ENCODE measurements at regions of chr5 and their contacts with region 1.

Region 1: GRCh38 chr5:93620487-93621326 is 37.7 kb downstream of the NR2F1 start:
- DNase-seq: peak; percentile 76
- ATAC-seq: peak; percentile 89
- H3K4me3 ChIP-seq: peak overlapping the region; percentile 8 to 84 (median 67)
- H3K4me3 Mint-ChIP-seq: peak overlapping the region; percentile 98
- H3K27ac ChIP-seq: no peak overlapping the region
- H3K27ac Mint-ChIP-seq: peak overlapping the region; percentile 60
- H3K4me1 ChIP-seq: peaks cover 5 to 16% of the 10 kb centered on the region in 2 donors
- H3K4me1 Mint-ChIP-seq: peaks cover 22% of the 10 kb centered on the region
- H3K27me3 ChIP-seq: peaks cover 0 to 8% (median 4%) of the 10 kb centered on the region in 4 experiments
- H3K27me3 Mint-ChIP-seq: peaks cover 7% of the 10 kb centered on the region
- CTCF ChIP-seq: no peak

Region 2: GRCh38 chr5:93800988-93801811 is 180.5 kb after region 1 on chr5:
- CTCF ChIA-PET with region 1: interaction called, 8 read pairs
- POLR2A ChIA-PET with region 1: no interaction called
- intact Hi-C with region 1: loop called (anchors 1 kb)
- DNase-seq: peak; percentile 44
- ATAC-seq: no peak
- H3K4me3 ChIP-seq: no peak overlapping the region
- H3K4me3 Mint-ChIP-seq: no peak overlapping the region
- H3K27ac ChIP-seq: no peak overlapping the region
- H3K27ac Mint-ChIP-seq: no peak overlapping the region
- H3K4me1 ChIP-seq: no peaks in the 10 kb centered on the region
- H3K4me1 Mint-ChIP-seq: no peaks in the 10 kb centered on the region
- H3K27me3 ChIP-seq: no peaks in the 10 kb centered on the region
- H3K27me3 Mint-ChIP-seq: no peaks in the 10 kb centered on the region
- CTCF ChIP-seq: peak; percentile 83

Region 3: DNA sequence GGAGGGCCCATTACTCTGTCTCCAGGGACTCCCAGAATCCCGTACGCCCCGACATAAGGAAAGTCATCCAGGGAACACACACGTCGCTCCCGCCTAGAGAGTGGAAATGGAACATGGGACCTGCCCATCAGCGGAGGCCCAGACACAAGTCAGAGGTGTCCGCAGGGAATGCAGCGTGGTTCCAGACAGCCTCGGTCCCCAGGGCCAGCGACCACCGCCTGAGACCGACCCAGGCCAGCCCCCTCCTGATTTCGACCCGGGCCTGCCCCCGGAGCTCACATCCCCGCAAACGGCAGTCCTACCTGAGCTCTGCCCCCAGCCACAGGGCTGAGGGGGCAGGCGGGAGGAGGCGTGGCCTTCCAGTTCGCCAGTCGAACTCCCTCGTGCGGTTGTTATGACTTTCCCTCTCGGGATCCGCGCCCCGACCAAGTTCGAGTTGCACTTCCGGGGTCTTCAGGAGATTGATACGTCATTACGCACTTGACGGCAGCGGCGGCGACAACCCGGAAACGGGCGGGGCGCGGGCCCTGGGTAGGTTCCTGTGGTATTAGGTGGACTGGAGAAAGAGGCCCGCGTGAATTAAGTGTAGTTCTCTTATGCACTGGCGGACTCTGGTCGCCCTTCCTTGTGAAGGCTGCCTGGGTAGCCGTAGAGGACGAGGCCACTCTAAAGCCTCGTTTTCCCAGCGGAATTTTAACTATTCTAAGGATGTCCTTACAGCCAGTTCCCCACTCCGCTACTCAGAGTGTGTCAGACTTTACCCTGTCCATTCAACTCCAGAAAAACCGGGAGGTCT is 490.7 kb after region 1 on chr5:
- CTCF ChIA-PET with region 1: no interaction called
- POLR2A ChIA-PET with region 1: no interaction called
- intact Hi-C with region 1: loop called (anchors 1 kb)
- DNase-seq: peak; percentile 94
- ATAC-seq: peak; percentile 95
- H3K4me3 ChIP-seq: peak overlapping the region; percentile 68 to 95 (median 91)
- H3K4me3 Mint-ChIP-seq: peak overlapping the region; percentile 95
- H3K27ac ChIP-seq: peak overlapping the region; percentile 81 to 90
- H3K27ac Mint-ChIP-seq: peak overlapping the region; percentile 90
- H3K4me1 ChIP-seq: peaks cover 7 to 12% of the 10 kb centered on the region in 2 donors
- H3K4me1 Mint-ChIP-seq: peaks cover 40% of the 10 kb centered on the region
- H3K27me3 ChIP-seq: peaks cover 0 to 4% (median 0%) of the 10 kb centered on the region in 4 experiments
- H3K27me3 Mint-ChIP-seq: peaks cover 18% of the 10 kb centered on the region
- CTCF ChIP-seq: no peak